ENCODE measurements at regions of chr7 and their contacts with region 1.

Region 1: GRCh38 chr7:43869006-43869866 is at the start of gene MRPS24:
- DNase-seq: peak; percentile 98
- H3K4me3 Mint-ChIP-seq: peak within 1 kb of the TSS; percentile 81
- H3K27ac Mint-ChIP-seq: peak within 1 kb of the TSS; percentile 89
- H3K4me1 Mint-ChIP-seq: peaks cover 20% of the 10 kb centered on the region
- H3K27me3 Mint-ChIP-seq: no peaks in the 10 kb centered on the region
- total RNA-seq, gene MRPS24: 153 TPM

Region 2: DNA sequence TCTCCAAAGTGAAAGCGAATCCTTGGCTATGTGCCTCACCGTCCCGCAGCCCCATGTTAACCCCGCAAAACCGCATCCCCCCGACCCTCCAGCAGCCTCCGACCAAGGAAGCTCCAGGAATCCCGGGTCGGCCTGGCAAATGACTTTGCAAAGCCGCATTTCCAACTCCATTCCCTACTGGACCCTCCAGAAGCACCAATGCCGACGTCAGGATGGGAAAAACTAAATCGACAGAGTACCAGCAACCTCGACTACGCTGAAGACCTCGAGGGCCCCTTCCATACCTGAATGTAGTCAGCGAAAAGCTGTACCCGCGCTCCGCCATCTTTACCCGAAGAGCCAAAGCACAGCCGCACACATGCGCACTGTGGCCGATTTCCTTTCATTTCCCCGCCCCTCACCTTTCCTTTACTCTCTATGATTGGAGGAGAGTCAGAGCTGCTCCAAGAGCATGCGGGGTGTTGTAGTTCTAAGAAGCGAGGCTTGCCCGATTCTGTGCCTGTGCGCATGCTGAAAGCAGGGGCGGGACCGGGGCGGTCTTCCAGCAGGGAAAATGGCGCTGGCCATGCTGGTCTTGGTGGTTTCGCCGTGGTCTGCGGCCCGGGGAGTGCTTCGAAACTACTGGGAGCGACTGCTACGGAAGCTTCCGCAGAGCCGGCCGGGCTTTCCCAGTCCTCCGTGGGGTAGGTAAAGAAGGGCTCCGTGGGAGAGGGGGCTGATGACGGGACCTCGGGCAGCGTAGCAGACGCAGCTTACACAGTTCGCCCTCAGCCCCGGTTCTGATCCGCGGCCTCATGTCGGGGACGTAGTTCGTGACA is 937.2 kb before region 1 on chr7 and contains the starts of genes MRPL32 and PSMA2:
- CTCF ChIA-PET with region 1: no interaction called
- intact Hi-C with region 1: loop called (anchors 10 kb)
- DNase-seq: peak; percentile 95
- H3K4me3 Mint-ChIP-seq: peak within 1 kb of the TSS; percentile 100
- H3K27ac Mint-ChIP-seq: peak within 1 kb of the TSS; percentile 100
- H3K4me1 Mint-ChIP-seq: peaks cover 60% of the 10 kb centered on the region
- H3K27me3 Mint-ChIP-seq: no peaks in the 10 kb centered on the region
- total RNA-seq, gene MRPL32: 67.4 to 71.8 TPM
- total RNA-seq, gene PSMA2: 199 to 221 TPM

Region 3: DNA sequence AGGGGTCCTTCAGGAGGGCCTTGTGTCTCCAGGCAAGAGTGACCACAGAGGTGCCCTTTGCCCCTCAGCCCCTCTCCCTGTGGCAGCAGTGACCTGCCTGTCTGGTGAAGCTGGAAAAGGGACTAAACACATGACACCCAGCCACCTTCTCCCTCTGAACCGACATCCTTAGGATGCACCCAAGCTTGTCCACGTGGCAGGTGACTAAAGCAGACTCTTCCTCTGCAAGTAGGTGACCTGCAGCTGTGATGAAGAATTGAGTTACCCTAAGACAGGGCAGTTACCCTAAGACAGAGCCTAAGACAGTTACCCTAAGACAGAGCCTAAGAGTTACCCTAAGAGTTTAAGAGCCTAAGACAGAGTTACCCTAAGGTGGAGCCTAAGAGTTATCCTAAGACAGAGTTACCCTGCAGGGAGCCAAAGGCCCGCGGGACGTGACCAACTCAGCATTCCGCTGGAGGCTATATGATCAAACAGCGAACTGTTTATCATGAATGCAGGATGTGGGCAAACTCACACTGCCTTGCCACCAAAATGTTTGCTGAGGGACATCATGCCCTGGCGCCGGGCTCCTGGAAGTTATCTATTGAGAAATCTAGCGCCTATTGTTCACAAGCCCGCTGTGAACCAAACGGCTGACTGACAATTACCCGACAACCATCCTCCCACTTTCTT is 61.0 kb before region 1 on chr7:
- CTCF ChIA-PET with region 1: no interaction called
- intact Hi-C with region 1: loop called (anchors 10 kb)
- DNase-seq: no peak
- H3K4me3 Mint-ChIP-seq: no peak overlapping the region
- H3K27ac Mint-ChIP-seq: no peak overlapping the region
- H3K4me1 Mint-ChIP-seq: no peaks in the 10 kb centered on the region
- H3K27me3 Mint-ChIP-seq: peaks cover 4% of the 10 kb centered on the region

Region 4: GRCh38 chr7:43906331-43907010 is 37.2 kb after region 1 on chr7 and contains the start of gene URGCP:
- CTCF ChIA-PET with region 1: no interaction called
- intact Hi-C with region 1: loop called (anchors 1 kb)
- DNase-seq: peak; percentile 54
- H3K4me3 Mint-ChIP-seq: peak within 1 kb of the TSS; percentile 92
- H3K27ac Mint-ChIP-seq: peak within 1 kb of the TSS; percentile 91
- H3K4me1 Mint-ChIP-seq: peaks cover 35% of the 10 kb centered on the region
- H3K27me3 Mint-ChIP-seq: no peaks in the 10 kb centered on the region
- total RNA-seq, gene URGCP: 21.5 to 23.9 TPM